Caco-2 (cell line): ENCODE measurements at regions of chr2 and their contacts with region 1.

Region 1: GRCh38 chr2:24466871-24467870 is 23.9 kb upstream of the NCOA1 start:
- DNase-seq: peak; percentile 81 to 83
- H3K4me3 ChIP-seq: no peak overlapping the region
- H3K4me3 Mint-ChIP-seq: peak overlapping the region; percentile 50
- H3K27ac Mint-ChIP-seq: peak overlapping the region; percentile 90
- H3K4me1 ChIP-seq: peaks cover 24% of the 10 kb centered on the region
- H3K4me1 Mint-ChIP-seq: peaks cover 19% of the 10 kb centered on the region
- H3K27me3 ChIP-seq: no peaks in the 10 kb centered on the region
- H3K27me3 Mint-ChIP-seq: no peaks in the 10 kb centered on the region
- CTCF ChIP-seq: no peak

Region 2: DNA sequence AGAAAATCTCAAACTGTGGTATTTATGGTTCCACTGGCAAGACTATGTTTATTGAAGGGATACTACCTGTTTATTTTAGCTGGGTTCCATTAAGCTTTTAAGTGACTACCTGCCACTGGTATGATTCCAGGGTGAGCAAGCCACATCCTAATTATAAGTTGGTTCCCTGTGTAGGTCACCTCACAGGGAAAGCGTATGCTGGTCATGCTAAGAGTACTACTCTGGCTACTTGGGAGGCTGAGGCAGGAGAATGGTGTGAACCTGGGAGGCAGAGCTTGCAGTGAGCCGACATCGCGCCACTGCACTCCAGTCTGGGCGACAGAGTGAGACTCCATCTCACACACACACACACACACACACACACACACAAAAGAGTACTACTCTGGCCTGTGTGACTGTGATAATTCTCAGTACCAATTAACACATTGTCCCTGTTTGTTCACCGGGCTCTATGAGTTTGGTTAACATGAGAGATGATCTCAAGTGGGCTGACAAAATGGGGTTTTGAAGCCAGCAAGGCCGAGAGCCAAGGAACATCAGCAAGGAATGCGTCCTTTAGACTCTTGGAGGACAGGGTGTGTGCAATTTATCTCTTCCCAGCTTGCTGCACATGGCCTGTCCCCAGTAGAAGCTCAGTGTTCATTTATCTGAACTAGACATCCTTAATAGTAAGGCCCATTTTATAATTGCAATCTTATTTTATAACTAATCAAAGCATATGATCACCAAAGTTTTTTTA is 91.7 kb before region 1 on chr2:
- CTCF ChIA-PET with region 1: no interaction called
- POLR2A ChIA-PET with region 1: no interaction called
- intact Hi-C with region 1: no loop called
- DNase-seq: no peak
- H3K4me3 ChIP-seq: no peak overlapping the region
- H3K4me3 Mint-ChIP-seq: no peak overlapping the region
- H3K27ac Mint-ChIP-seq: no peak overlapping the region
- H3K4me1 ChIP-seq: peaks cover 10% of the 10 kb centered on the region; the same call in 1 of the 2 replicates
- H3K4me1 Mint-ChIP-seq: no peaks in the 10 kb centered on the region
- H3K27me3 ChIP-seq: no peaks in the 10 kb centered on the region
- H3K27me3 Mint-ChIP-seq: no peaks in the 10 kb centered on the region
- CTCF ChIP-seq: no peak

Region 3: DNA sequence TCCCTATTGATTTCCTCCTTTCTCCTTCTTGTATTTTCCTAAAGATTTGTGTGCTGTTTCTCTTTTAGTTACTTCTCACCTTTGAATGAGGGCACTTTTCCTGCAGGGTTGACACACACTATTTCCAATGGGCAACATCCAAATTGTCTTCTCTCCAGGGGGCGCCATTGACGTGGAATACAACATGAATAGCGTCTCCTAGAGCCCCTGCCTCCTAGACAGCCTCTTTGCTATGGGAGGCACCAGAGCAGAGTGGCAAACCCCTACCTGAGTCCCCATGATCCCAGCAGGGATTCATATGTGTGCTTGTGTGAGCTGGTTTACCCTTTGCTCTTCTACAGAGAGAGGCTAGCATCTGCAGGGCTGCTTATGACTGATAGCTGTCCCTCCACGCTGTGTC is 45.5 kb before region 1 on chr2:
- CTCF ChIA-PET with region 1: no interaction called
- POLR2A ChIA-PET with region 1: no interaction called
- intact Hi-C with region 1: loop called (anchors 5 kb)
- DNase-seq: peak; percentile 78 to 82
- H3K4me3 ChIP-seq: no peak overlapping the region
- H3K4me3 Mint-ChIP-seq: no peak overlapping the region
- H3K27ac Mint-ChIP-seq: no peak overlapping the region
- H3K4me1 ChIP-seq: peaks cover 13% of the 10 kb centered on the region
- H3K4me1 Mint-ChIP-seq: peaks cover 9% of the 10 kb centered on the region
- H3K27me3 ChIP-seq: no peaks in the 10 kb centered on the region
- H3K27me3 Mint-ChIP-seq: no peaks in the 10 kb centered on the region
- CTCF ChIP-seq: peak; percentile 58 to 60

Region 4: GRCh38 chr2:24477229-24477628 is 10.1 kb after region 1 on chr2:
- CTCF ChIA-PET with region 1: no interaction called
- POLR2A ChIA-PET with region 1: no interaction called
- intact Hi-C with region 1: loop called (anchors 1 kb)
- DNase-seq: peak; percentile 62 to 71
- H3K4me3 ChIP-seq: no peak overlapping the region
- H3K4me3 Mint-ChIP-seq: peak overlapping the region; percentile 7
- H3K27ac Mint-ChIP-seq: peak overlapping the region; percentile 29
- H3K4me1 ChIP-seq: peaks cover 9% of the 10 kb centered on the region
- H3K4me1 Mint-ChIP-seq: peaks cover 25% of the 10 kb centered on the region
- H3K27me3 ChIP-seq: no peaks in the 10 kb centered on the region
- H3K27me3 Mint-ChIP-seq: no peaks in the 10 kb centered on the region
- CTCF ChIP-seq: no peak

Region 5: DNA sequence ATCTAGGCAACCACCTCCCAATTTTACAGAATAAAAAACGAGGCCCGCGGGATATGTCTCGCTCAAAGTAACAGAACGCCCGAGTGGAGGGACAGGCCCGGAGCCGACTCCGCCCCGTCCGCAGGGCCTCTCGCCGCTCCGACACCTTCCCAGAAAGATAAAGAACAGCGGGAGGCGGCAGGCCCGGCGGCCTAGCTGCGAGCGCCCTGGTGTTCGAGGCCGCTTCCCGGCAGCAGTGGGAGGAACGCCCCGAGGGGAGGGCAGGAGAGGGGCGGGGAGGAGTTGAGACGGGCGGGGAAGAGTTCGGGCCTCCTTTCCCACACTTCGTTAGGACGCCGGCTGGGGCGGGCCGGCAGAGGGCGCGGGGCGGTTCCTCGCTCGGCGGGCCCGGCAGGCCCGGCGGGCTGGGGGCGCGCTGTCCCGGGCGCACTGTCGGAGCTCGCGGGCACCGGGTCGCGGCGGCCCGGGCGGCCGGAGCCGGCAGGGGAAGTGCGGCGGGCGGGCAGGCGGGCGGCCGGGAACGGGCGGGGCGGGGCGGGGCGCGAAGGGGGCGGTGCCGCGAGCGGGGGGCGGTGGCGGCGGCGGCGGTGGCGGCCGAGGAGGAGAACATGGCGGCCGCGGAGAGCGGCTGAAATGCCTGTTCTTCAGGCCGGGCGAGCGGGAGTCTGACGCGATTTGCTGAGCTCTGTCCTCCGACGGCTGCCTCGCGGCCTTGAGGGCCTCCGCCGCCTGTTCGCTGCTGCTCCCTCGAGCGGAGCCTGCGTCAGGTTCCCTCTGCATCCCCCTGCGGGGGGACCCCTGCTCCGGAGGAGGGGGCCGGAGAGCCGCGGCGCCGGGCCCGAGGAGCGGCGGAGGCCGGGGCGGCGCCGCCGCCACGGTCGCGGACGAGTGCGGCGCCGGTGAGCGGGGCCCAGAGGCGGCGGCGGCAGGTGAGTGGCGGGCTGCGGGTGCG is 23.8 kb after region 1 on chr2 and contains the start of gene NCOA1:
- CTCF ChIA-PET with region 1: interaction called, 3 read pairs
- POLR2A ChIA-PET with region 1: interaction called, 3 read pairs
- intact Hi-C with region 1: loop called (anchors 1 kb)
- DNase-seq: peak; percentile 93
- H3K4me3 ChIP-seq: peak within 1 kb of the TSS; percentile 96
- H3K4me3 Mint-ChIP-seq: peak within 1 kb of the TSS; percentile 74
- H3K27ac Mint-ChIP-seq: peak within 1 kb of the TSS; percentile 69
- H3K4me1 ChIP-seq: peaks cover 43% of the 10 kb centered on the region
- H3K4me1 Mint-ChIP-seq: peaks cover 53% of the 10 kb centered on the region
- H3K27me3 ChIP-seq: no peaks in the 10 kb centered on the region
- H3K27me3 Mint-ChIP-seq: no peaks in the 10 kb centered on the region
- CTCF ChIP-seq: peak; percentile 18 to 50
- total RNA-seq, gene NCOA1: 34.7 and 37.1 TPM in 2 replicates